HCT116 (cell line): ENCODE measurements at regions of chr4 and their contacts with region 1.

Region 1: DNA sequence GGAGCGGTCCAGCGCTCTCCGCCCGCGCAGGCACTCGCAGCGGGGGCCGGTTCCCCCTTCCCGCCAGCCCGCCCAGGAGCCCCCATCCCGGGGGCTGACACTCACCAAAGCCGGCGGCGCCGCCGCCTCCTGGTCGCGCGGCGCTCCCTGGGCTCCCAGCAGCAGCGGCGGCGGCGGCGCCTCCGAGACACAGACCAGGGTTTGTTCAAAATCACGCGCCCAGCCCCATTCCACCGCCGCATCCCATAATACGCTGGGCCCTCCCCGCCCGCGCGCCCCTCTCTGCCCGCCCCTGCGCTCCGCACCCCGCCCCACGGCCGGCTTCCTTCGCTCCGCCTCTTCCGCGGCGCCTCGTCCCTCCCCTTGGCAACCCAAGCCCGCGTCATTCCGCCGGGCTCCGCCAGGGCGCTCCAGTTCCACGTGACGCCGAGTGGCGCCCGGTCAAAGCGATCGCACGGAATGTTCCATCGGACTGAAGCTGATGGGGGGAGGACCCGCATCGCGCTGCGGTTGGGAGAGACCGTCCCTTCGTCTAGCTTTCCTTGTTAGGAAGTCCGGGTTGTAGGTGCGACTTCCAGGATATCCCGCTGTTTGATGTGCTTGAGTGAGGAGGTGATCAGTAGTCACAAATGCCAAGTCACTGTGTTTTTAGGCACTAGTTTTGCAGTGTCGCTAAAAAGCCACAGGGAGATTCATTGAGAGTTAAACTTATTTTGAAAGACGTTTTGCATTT is 2.2 kb upstream of the LIN54 start:
- DNase-seq: peak; percentile 97
- ATAC-seq: peak; percentile 89
- H3K4me3 ChIP-seq: peak overlapping the region; percentile 69 to 82
- H3K27ac ChIP-seq: peak overlapping the region; percentile 72
- H3K4me1 ChIP-seq: peaks cover 11 to 31% of the 10 kb centered on the region in 2 experiments
- H3K27me3 ChIP-seq: no peaks in the 10 kb centered on the region
- CTCF ChIP-seq: peak in 2 of 3 experiments; percentile 25 to 30; a peak in 3 of 6 replicates
- POLR2A ChIP-seq: no peak
- RAD21 ChIP-seq: peak; percentile 46

Region 2: GRCh38 chr4:82851885-82852750 is 160.7 kb before region 1 on chr4:
- CTCF ChIA-PET with region 1: no interaction called
- POLR2A ChIA-PET with region 1: no interaction called
- RAD21 ChIA-PET with region 1: no interaction called
- intact Hi-C with region 1: loop called (anchors 1 kb)
- DNase-seq: peak; percentile 33
- ATAC-seq: peak; percentile 89
- H3K4me3 ChIP-seq: no peak overlapping the region
- H3K27ac ChIP-seq: no peak overlapping the region
- H3K4me1 ChIP-seq: no peaks in the 10 kb centered on the region
- H3K27me3 ChIP-seq: no peaks in the 10 kb centered on the region
- CTCF ChIP-seq: peak; percentile 39 to 67 (median 60); a peak in 5 of 6 replicates
- POLR2A ChIP-seq: no peak
- RAD21 ChIP-seq: peak; percentile 64

Region 3: DNA sequence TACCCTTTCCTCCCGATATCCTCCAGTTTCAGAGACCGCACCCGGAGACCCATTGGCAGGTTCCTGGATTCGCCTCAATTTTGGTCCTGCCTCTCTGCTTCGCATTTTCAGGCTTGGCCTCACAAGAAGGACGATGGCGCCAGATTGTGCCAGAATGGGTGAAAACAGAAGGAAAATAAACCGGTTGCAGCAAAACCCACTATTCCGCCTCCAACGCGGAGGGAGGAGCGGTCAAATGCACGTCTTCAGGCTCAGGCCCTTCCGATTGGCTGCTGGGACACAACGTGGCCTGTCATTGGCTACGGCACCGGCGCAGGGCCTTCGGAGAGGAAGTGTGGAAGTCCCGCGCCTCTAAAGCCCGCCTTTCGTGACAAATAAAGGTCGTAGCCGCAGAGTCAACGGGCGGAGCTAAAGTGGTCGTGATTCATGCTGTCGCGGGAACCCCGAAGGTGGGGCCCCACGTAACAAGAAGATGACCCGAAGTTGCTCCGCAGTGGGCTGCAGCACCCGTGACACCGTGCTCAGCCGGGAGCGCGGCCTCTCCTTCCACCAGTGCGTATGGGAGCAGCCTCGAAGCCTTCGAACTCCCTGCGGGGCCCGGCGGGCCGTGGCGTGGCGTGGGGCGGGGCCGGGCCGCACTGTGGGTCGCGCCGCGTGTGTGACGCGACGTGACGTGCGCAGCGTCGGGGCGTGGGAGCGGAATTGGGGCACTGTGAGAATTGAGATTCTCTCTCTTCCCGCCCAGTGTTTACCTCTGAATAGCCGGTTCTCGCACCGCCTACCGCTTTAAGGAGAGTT is 112.3 kb before region 1 on chr4 and contains the start of gene THAP9:
- CTCF ChIA-PET with region 1: no interaction called
- POLR2A ChIA-PET with region 1: interaction called, 3 read pairs
- RAD21 ChIA-PET with region 1: interaction called, 3 to 6 read pairs
- intact Hi-C with region 1: loop called (anchors 1 kb)
- DNase-seq: peak; percentile 99
- ATAC-seq: peak; percentile 95
- H3K4me3 ChIP-seq: peak within 1 kb of the TSS; percentile 93 to 95
- H3K27ac ChIP-seq: peak within 1 kb of the TSS; percentile 87
- H3K4me1 ChIP-seq: peaks cover 6 to 20% of the 10 kb centered on the region in 2 experiments; a peak in 3 of 4 replicates
- H3K27me3 ChIP-seq: no peaks in the 10 kb centered on the region
- CTCF ChIP-seq: no peak
- POLR2A ChIP-seq: peak; percentile 92
- RAD21 ChIP-seq: no peak
- total RNA-seq, gene THAP9: 6.4 TPM

Region 4: DNA sequence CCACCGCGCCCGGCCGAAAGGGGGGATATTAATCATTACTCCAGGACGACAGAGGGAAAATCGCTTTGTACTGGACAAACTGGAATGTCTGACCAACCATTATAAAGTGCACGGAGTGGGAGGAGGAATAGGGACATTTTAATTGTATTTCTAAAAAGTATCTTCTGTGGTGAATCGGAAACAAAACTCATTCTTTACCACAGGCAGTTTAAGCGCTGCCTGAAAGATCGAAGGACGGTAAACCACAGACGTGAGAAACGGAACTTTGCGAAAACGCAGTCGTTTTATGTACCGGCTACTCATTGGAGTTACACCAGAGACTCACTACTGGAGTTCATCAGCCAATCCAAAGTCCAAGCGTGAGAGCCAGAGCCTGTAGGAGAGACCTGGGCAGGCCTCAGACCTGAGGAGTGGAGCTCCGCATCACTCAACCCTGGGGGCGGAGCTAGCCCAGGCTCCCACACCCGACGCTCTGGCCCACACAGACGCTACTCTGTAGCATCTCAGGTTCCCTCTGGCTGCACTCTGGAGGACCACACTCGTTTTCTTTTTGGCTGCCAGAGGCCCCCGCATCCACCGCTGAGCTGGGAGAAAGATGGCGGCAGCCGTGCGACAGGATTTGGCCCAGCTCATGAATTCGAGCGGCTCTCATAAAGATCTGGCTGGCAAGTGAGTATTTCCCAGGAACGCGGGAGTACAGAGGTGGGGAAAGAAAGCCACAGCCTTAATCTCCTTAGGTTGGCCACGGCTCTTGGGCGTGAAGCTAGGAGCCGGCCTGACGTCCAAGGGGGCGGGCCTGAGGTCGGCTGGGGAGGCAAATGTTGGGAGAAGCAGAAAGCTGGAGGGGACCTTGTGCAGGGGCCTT is 22.0 kb after region 1 on chr4 and contains the start of gene COPS4:
- CTCF ChIA-PET with region 1: interaction called, 3 read pairs
- POLR2A ChIA-PET with region 1: interaction called, 14 read pairs
- RAD21 ChIA-PET with region 1: interaction called in 1 of 2 experiments, 7 read pairs
- intact Hi-C with region 1: loop called (anchors 1 kb)
- DNase-seq: peak; percentile 100
- ATAC-seq: peak; percentile 98
- H3K4me3 ChIP-seq: peak within 1 kb of the TSS; percentile 95 to 99
- H3K27ac ChIP-seq: peak within 1 kb of the TSS; percentile 85
- H3K4me1 ChIP-seq: peaks cover 3 to 13% of the 10 kb centered on the region in 2 experiments; a peak in 2 of 4 replicates
- H3K27me3 ChIP-seq: no peaks in the 10 kb centered on the region
- CTCF ChIP-seq: peak in 1 of 3 experiments; percentile 43; a peak in 2 of 6 replicates
- POLR2A ChIP-seq: peak; percentile 72
- RAD21 ChIP-seq: 0 out of 2 replicates have a peak, but pooled peaks have one; percentile 23
- total RNA-seq, gene COPS4: 28.6 TPM

Region 5: DNA sequence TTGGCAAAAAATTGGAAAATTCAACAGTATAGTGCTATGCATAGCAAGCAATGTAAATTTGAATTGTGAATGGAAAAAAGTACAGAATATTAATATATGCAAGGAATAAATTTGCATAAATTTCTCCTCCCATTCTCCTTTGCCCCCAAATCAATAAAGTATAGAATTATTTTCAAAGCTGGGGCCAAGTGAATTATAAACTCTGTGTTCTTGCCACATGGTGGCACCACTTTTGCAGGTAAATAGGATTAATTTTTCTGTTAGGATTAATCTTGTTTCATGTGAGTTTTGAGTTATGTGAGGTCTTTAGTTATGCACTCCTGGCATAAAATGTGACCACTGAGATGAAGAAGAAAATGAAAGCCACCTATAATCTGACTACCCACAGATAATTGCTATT is 42.1 kb after region 1 on chr4:
- CTCF ChIA-PET with region 1: no interaction called
- POLR2A ChIA-PET with region 1: no interaction called
- RAD21 ChIA-PET with region 1: no interaction called
- intact Hi-C with region 1: no loop called
- DNase-seq: peak; percentile 10
- ATAC-seq: peak; percentile 47
- H3K4me3 ChIP-seq: no peak overlapping the region
- H3K27ac ChIP-seq: no peak overlapping the region
- H3K4me1 ChIP-seq: no peaks in the 10 kb centered on the region
- H3K27me3 ChIP-seq: no peaks in the 10 kb centered on the region
- CTCF ChIP-seq: peak; percentile 28 to 60 (median 57); a peak in 5 of 6 replicates
- POLR2A ChIP-seq: no peak
- RAD21 ChIP-seq: peak; percentile 69

Region 6: GRCh38 chr4:83180431-83180968 is 167.6 kb after region 1 on chr4:
- CTCF ChIA-PET with region 1: no interaction called
- POLR2A ChIA-PET with region 1: no interaction called
- RAD21 ChIA-PET with region 1: no interaction called
- intact Hi-C with region 1: no loop called
- DNase-seq: no peak
- ATAC-seq: no peak
- H3K4me3 ChIP-seq: no peak overlapping the region
- H3K27ac ChIP-seq: no peak overlapping the region
- H3K4me1 ChIP-seq: no peaks in the 10 kb centered on the region
- H3K27me3 ChIP-seq: no peaks in the 10 kb centered on the region
- CTCF ChIP-seq: no peak
- POLR2A ChIP-seq: no peak
- RAD21 ChIP-seq: no peak

Region 7: GRCh38 chr4:83252782-83253405 is 240.0 kb after region 1 on chr4:
- CTCF ChIA-PET with region 1: interaction called, 3 read pairs
- POLR2A ChIA-PET with region 1: no interaction called
- RAD21 ChIA-PET with region 1: interaction called in 1 of 2 experiments, 5 read pairs
- intact Hi-C with region 1: loop called (anchors 5 kb)
- DNase-seq: peak; percentile 54
- ATAC-seq: peak; percentile 53
- H3K4me3 ChIP-seq: no peak overlapping the region
- H3K27ac ChIP-seq: no peak overlapping the region
- H3K4me1 ChIP-seq: peaks cover 41 to 78% of the 10 kb centered on the region in 2 experiments
- H3K27me3 ChIP-seq: no peaks in the 10 kb centered on the region
- CTCF ChIP-seq: peak; percentile 70 to 87 (median 83); a peak in 5 of 6 replicates
- POLR2A ChIP-seq: no peak
- RAD21 ChIP-seq: peak; percentile 78